Endothelial cell of umbilical vein (primary cell): ENCODE measurements at regions of chrX and their contacts with region 1.

Region 1: GRCh38 chrX:129777218-129778030 is 2.3 kb upstream of the SASH3 start:
- DNase-seq: peak; percentile 44
- H3K4me3 ChIP-seq: no peak overlapping the region
- H3K27ac ChIP-seq: peak overlapping the region; percentile 86
- H3K4me1 ChIP-seq: peaks cover 14% of the 10 kb centered on the region
- H3K27me3 ChIP-seq: no peaks in the 10 kb centered on the region
- CTCF ChIP-seq: no peak
- POLR2A ChIP-seq: no peak

Region 2: GRCh38 chrX:129843459-129844306 is 66.3 kb after region 1 on chrX and contains the start of gene ZDHHC9:
- CTCF ChIA-PET with region 1: no interaction called
- POLR2A ChIA-PET with region 1: no interaction called
- dilution Hi-C with region 1: no loop called
- intact Hi-C with region 1: loop called (anchors 2 kb)
- DNase-seq: peak; percentile 88
- H3K4me3 ChIP-seq: peak within 1 kb of the TSS; percentile 64 to 90 (median 69)
- H3K27ac ChIP-seq: peak within 1 kb of the TSS; percentile 59
- H3K4me1 ChIP-seq: peaks cover 4% of the 10 kb centered on the region
- H3K27me3 ChIP-seq: peaks cover 3 to 6% of the 10 kb centered on the region in 2 experiments
- CTCF ChIP-seq: no peak
- POLR2A ChIP-seq: peak; percentile 28
- total RNA-seq, gene ZDHHC9: 33.6 and 38.2 TPM in 2 replicates